ENCODE measurements at regions of chr9 and their contacts with region 1.

Region 1: GRCh38 chr9:136944519-136945279 is at the starts of genes C8G and FBXW5:
- DNase-seq: peak; percentile 91 to 97
- H3K4me3 ChIP-seq: peak within 1 kb of the TSS; percentile 82 to 83
- H3K27ac ChIP-seq: peak within 1 kb of the TSS; percentile 88 to 91
- H3K4me1 ChIP-seq: peaks cover 0 to 58% (median 47%) of the 10 kb centered on the region in 4 donors
- H3K27me3 ChIP-seq: no peaks in the 10 kb centered on the region
- CTCF ChIP-seq: peak; percentile 98

Region 2: GRCh38 chr9:136790927-136791641 is 153.6 kb before region 1 on chr9 and contains the start of gene TMEM141:
- intact Hi-C with region 1: loop called (anchors 5 kb)
- DNase-seq: peak; percentile 100
- H3K4me3 ChIP-seq: peak within 1 kb of the TSS; percentile 71 to 72
- H3K27ac ChIP-seq: peak within 1 kb of the TSS; percentile 87 to 92
- H3K4me1 ChIP-seq: peaks cover 0 to 27% (median 13%) of the 10 kb centered on the region in 4 donors
- H3K27me3 ChIP-seq: peaks cover 0 to 17% of the 10 kb centered on the region in 2 donors
- CTCF ChIP-seq: no peak

Region 3: DNA sequence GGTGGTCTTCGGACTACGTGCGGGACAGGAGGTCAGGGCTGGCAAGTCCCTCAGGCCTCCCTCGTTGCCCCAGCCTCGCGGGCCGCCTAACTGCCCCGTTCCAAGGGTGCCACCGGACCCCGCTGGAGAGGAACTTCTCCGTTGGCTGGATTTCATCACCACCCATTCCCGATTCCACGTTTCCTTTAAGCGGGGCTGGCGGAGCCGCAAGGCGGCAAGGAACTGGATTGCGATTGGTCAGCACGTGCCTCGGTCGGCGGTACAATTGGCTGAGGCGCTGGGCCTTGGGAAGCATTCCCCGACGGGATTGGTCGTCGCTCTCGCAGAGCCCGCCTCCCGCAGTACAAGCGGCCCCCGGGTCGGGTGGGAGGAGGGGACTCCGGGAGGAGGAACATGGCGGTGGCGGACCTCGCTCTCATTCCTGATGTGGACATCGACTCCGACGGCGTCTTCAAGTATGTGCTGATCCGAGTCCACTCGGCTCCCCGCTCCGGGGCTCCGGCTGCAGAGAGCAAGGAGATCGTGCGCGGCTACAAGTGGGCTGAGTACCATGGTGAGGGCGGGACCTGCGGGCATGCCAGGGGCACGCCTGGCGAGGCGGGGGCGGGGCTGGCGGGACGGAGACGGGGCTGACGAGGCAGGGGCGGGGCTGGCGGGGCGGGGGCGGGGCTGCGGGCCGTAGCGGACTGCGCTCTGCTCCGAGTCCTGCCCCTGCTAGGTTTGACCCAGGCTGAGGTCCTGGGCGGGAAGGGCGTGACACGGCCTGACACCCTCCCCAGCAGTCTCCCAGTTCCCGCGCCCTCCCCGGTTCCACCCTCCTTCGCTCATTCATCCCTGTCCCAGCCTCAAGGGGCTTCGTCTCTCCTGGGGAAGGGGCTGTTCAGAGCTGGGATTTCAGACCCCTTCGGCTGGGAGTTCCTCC is 95.4 kb before region 1 on chr9 and contains the start of gene PHPT1:
- intact Hi-C with region 1: loop called (anchors 2 kb)
- DNase-seq: peak; percentile 98 to 99
- H3K4me3 ChIP-seq: peak within 1 kb of the TSS; percentile 70 to 94
- H3K27ac ChIP-seq: peak within 1 kb of the TSS; percentile 92 to 96
- H3K4me1 ChIP-seq: peaks cover 0 to 57% (median 39%) of the 10 kb centered on the region in 4 donors
- H3K27me3 ChIP-seq: peaks cover 0 to 28% of the 10 kb centered on the region in 2 donors
- CTCF ChIP-seq: no peak

Region 4: GRCh38 chr9:136885950-136886578 is 58.6 kb before region 1 on chr9 and contains the start of gene TRAF2:
- intact Hi-C with region 1: loop called (anchors 5 kb)
- DNase-seq: peak; percentile 95 to 98
- H3K4me3 ChIP-seq: peak within 1 kb of the TSS; percentile 70 to 90
- H3K27ac ChIP-seq: peak within 1 kb of the TSS; percentile 80 to 92
- H3K4me1 ChIP-seq: peaks cover 0 to 32% (median 20%) of the 10 kb centered on the region in 4 donors
- H3K27me3 ChIP-seq: no peaks in the 10 kb centered on the region
- CTCF ChIP-seq: peak in 1 of 2 experiments; percentile 39

Region 5: DNA sequence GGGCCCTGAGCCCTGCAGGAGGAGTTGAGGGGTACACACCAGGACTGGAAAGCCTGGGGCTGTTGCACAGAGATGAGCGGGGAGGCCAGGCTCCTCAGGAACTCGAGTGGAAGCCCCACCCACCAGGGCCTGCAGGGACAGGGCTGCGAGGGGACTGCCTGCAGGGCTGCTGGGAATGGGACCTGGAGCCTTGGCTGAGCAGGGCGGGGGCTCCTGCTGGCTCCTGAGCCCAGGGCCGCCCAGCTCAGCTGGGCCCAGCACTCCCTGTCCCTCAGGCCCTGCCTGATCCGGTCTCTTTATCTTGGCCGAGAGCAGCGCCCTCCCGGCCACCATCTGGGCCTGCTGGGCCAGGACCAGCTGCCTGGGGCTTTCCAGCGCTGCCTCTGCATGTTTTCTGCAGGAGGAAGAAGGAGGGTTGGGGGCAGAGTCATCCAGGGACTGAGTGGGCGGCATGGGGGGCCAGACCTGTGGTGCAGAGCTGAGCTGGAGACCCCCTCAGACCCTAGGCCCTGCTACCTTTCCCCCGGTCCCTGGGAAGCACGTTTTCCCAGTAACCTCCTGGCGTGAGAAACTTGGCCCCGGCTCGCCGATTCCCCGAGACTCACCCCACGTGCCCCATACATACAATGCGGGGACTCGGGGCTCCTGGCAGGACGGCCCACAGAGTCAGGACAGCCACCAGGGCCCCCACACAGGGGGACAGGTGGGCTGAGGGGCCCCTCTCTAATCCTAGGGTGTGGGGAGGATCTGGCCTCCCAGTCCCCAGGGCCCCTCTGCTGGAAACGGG is 16.8 kb after region 1 on chr9:
- intact Hi-C with region 1: no loop called
- DNase-seq: no peak
- H3K4me3 ChIP-seq: no peak overlapping the region
- H3K27ac ChIP-seq: peak overlapping the region; percentile 40 to 47
- H3K4me1 ChIP-seq: peaks cover 0 to 19% (median 11%) of the 10 kb centered on the region in 4 donors
- H3K27me3 ChIP-seq: peaks cover 0 to 2% of the 10 kb centered on the region in 2 donors
- CTCF ChIP-seq: no peak